ENCODE measurements at regions of chr2 and their contacts with region 1.

Region 1: GRCh38 chr2:42558437-42559227 is 9.8 kb upstream of the MTA3 start:
- DNase-seq: peak; percentile 33
- H3K4me3 ChIP-seq: no peak overlapping the region
- H3K27ac ChIP-seq: peak overlapping the region; percentile 90
- H3K4me1 ChIP-seq: peaks cover 74% of the 10 kb centered on the region
- CTCF ChIP-seq: 0 out of 2 replicates have a peak, but pooled peaks have one; percentile 42

Region 2: DNA sequence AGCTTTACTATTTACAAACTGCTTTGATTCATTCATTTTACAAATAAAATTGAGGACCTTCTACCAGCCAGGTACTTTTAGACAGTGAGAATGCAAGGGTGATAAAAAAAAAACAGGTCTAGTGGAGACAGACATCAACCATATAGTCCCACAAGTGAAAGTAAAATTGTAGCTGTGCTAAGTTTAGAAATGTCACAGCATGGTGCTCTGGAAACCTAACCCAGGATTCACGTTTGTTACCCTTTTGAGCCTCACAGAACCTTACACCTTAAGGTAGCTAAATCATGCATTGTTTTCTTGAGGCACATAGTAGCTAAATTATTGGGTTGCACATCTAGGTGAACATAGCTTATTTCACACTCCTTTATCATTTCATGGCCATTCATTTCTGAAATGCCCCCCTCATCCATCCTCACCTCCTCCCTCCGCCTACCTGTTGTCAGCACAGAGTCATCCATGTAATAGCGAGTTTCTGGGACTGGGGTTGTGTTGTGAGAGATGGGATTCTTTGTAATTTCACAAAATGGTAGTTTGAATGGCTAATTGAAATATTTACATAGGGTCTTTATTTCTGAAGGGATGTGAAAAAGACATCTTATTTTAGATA is 16.9 kb after region 1 on chr2:
- CTCF ChIA-PET with region 1: no interaction called
- POLR2A ChIA-PET with region 1: interaction called, 10 read pairs
- intact Hi-C with region 1: no loop called
- DNase-seq: no peak
- H3K4me3 ChIP-seq: no peak overlapping the region
- H3K27ac ChIP-seq: peak overlapping the region; percentile 5
- H3K4me1 ChIP-seq: peaks cover 51% of the 10 kb centered on the region
- CTCF ChIP-seq: no peak

Region 3: DNA sequence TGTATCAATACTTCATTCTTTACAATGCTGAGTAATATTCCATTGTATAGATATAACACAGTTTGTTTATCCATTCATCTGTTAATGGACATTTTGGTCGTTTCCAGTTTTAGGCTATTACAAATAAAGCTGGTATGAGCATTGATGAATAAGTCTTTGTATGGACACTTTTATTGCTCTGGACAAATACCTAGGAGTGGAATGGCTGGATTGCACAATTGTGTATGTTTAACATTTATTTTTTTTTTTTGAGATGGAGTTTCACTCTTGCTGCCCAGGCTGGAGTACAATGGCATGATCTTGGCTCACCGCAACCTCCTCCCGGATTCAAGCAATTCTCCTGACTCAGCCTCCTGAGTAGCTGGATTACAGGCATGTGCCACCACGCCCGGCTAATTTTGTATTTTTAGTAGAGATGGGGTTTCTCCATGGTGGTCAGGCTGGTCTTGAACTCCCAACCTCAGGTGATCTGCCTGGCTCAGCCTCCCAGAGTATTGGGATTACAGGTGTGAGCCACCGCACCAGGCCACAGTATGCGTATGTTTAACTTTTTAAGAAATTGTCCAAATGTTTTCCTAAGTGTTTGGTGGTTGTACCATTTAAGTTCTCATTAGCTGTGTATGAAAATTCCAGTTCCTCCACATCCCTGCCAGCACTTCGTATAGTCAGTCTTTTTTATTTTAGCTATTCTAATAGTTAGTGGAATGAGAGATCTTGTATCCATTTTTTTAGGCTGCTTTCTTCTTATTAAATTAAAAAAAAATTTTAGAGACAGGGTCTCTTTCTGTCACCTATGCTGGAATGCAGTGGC is 428.7 kb after region 1 on chr2:
- CTCF ChIA-PET with region 1: no interaction called
- POLR2A ChIA-PET with region 1: no interaction called
- intact Hi-C with region 1: no loop called
- DNase-seq: no peak
- H3K4me3 ChIP-seq: no peak overlapping the region
- H3K27ac ChIP-seq: no peak overlapping the region
- H3K4me1 ChIP-seq: no peaks in the 10 kb centered on the region
- CTCF ChIP-seq: no peak